ENCODE measurements at regions of chr3 and their contacts with region 1.

Region 1: GRCh38 chr3:133927540-133928066 is 31.9 kb upstream of the RAB6B start:
- DNase-seq: peak; percentile 37
- H3K4me3 ChIP-seq: peak overlapping the region; percentile 32 to 53 (median 39)
- H3K27ac ChIP-seq: no peak overlapping the region
- H3K4me1 ChIP-seq: peaks cover 7% of the 10 kb centered on the region
- H3K27me3 ChIP-seq: no peaks in the 10 kb centered on the region
- CTCF ChIP-seq: peak; percentile 70 to 87
- POLR2A ChIP-seq: no peak

Region 2: GRCh38 chr3:132730891-132731580 is 1196.6 kb before region 1 on chr3:
- CTCF ChIA-PET with region 1: interaction called, 18 read pairs
- POLR2A ChIA-PET with region 1: no interaction called
- dilution Hi-C with region 1: no loop called
- intact Hi-C with region 1: loop called (anchors 2 kb)
- DNase-seq: peak; percentile 61
- H3K4me3 ChIP-seq: no peak overlapping the region
- H3K27ac ChIP-seq: no peak overlapping the region
- H3K4me1 ChIP-seq: peaks cover 2% of the 10 kb centered on the region
- H3K27me3 ChIP-seq: peaks cover 7 to 18% of the 10 kb centered on the region in 2 experiments
- CTCF ChIP-seq: peak; percentile 27 to 40
- POLR2A ChIP-seq: no peak

Region 3: DNA sequence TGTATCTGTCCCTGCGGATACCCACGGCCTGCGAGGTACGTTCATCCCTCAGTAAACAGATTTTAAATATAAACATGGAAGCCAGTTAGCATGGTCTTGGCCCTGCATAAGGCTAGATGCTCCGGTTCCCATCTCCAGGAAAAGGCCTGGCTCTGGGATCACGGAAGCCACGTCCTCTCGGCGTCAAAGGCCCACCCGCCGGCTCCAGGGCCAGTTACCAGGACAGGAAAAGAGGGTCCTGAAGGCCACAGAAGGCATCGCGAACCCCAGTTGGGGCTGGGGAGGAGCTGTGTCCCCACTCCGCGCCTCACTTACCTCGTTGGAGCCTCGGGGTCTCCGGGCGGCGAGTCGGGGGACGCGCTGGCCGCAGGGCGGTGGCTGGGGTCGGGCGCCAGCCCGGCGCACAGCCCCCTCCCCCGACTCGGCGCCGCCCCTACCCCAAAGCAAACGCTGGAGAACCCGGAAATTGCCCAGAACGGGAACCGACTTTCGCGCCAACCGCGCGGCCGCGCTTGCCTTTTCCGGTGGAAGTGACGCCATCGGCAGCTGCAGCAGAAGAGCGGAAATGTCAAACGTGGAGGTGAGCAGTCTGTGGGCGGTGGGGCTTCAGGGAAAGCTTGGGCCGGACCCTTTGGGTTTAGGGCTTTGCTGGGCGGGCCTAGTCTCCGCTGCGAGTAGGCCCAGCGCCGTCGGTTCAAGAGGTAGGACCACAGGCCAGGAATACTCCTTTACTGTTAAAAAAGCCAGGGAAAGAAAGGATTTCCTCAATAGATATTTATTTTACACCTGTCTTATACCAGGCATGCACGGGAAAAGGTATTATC is 265.9 kb before region 1 on chr3 and contains the start of gene TOPBP1:
- CTCF ChIA-PET with region 1: interaction called, 3 read pairs
- POLR2A ChIA-PET with region 1: no interaction called
- dilution Hi-C with region 1: no loop called
- intact Hi-C with region 1: loop called (anchors 1 kb)
- DNase-seq: peak; percentile 69
- H3K4me3 ChIP-seq: peak within 1 kb of the TSS; percentile 60 to 86 (median 62)
- H3K27ac ChIP-seq: peak within 1 kb of the TSS; percentile 90
- H3K4me1 ChIP-seq: peaks cover 22% of the 10 kb centered on the region
- H3K27me3 ChIP-seq: no peaks in the 10 kb centered on the region
- CTCF ChIP-seq: no peak
- POLR2A ChIP-seq: peak; percentile 73
- total RNA-seq, gene TOPBP1: 42.2 and 42.4 TPM in 2 replicates

Region 4: DNA sequence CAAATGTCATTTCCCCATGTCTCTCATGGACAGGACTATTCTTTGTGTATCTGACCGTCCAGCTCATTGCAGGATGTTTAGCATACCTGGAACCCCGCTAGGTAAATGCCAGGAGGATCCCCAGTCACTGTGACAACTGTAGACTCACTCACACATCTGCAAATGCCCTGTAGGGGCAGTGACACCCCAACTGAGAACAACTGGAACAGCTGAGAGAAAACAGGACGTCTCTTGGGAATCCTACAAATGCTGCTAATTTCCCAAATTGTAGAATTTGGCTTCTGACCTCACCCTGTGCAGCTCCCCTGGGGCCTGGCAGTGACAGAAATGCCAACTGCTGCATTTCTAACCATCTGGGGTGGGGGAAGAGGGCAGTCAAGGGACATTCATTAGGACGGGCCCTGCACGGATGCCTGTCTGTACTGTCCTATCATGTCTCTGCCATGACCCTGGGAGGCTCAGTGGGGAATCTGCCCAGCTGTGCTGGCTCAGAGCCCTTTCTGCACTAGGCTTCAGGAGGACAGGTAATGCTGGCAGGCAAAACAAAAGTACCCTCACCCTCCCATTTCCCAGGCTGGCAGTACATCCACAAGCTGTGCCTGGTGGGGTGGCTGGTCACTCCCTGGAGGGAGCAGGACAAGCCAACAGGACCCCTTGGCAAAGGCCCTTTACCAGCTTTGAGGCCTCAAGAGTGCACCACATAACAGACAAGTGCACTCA is 62.3 kb before region 1 on chr3:
- CTCF ChIA-PET with region 1: no interaction called
- POLR2A ChIA-PET with region 1: no interaction called
- dilution Hi-C with region 1: no loop called
- intact Hi-C with region 1: no loop called
- DNase-seq: no peak
- H3K4me3 ChIP-seq: no peak overlapping the region
- H3K27ac ChIP-seq: no peak overlapping the region
- H3K4me1 ChIP-seq: no peaks in the 10 kb centered on the region
- H3K27me3 ChIP-seq: no peaks in the 10 kb centered on the region
- CTCF ChIP-seq: no peak
- POLR2A ChIP-seq: no peak

Region 5: GRCh38 chr3:134039161-134039862 is 111.7 kb after region 1 on chr3:
- CTCF ChIA-PET with region 1: no interaction called
- POLR2A ChIA-PET with region 1: no interaction called
- dilution Hi-C with region 1: no loop called
- intact Hi-C with region 1: loop called (anchors 1 kb)
- DNase-seq: no peak
- H3K4me3 ChIP-seq: no peak overlapping the region
- H3K27ac ChIP-seq: no peak overlapping the region
- H3K4me1 ChIP-seq: no peaks in the 10 kb centered on the region
- H3K27me3 ChIP-seq: no peaks in the 10 kb centered on the region
- CTCF ChIP-seq: peak; percentile 15 to 40
- POLR2A ChIP-seq: no peak

Region 6: DNA sequence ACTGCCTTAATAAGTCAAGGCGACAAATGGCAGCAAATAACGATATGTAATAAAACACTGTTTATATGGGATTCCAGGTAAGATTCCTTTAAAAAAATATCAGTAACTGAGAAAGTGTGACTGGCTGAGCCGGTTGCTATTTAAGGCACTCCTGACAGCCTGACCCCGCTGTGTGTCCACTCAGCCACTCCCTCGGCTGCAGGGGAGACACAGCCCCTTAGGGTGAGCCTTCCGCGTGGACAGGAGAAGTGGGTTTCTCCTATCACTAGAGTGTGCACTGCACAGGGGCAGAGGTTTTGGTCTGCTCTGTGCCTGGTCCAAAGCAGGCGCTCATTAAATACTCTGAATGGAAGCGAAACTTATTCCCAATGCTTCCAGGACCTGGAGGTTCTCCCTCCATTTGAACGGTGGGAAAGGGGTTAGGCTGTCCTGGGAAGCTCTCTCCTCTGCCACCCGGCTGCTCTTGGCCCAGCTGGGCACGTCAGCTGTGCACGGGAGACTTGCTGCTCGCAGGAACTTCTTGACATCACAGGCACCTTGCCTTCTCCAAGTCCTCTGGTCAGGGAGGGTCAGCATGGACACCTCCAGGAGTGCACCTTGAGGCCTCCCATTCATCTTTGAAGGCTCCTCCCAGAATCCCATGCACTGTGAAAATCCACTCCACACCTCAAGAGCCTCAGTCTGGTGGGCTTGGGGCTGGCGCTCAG is 145.4 kb after region 1 on chr3:
- CTCF ChIA-PET with region 1: no interaction called
- POLR2A ChIA-PET with region 1: no interaction called
- dilution Hi-C with region 1: no loop called
- intact Hi-C with region 1: no loop called
- DNase-seq: no peak
- H3K4me3 ChIP-seq: no peak overlapping the region
- H3K27ac ChIP-seq: no peak overlapping the region
- H3K4me1 ChIP-seq: no peaks in the 10 kb centered on the region
- H3K27me3 ChIP-seq: no peaks in the 10 kb centered on the region
- CTCF ChIP-seq: no peak
- POLR2A ChIP-seq: no peak

Region 7: GRCh38 chr3:134222835-134223234 is 295.2 kb after region 1 on chr3:
- CTCF ChIA-PET with region 1: interaction called, 38 read pairs
- POLR2A ChIA-PET with region 1: no interaction called
- dilution Hi-C with region 1: loop called (anchors 25 kb)
- intact Hi-C with region 1: no loop called
- DNase-seq: no peak
- H3K4me3 ChIP-seq: no peak overlapping the region
- H3K27ac ChIP-seq: no peak overlapping the region
- H3K4me1 ChIP-seq: no peaks in the 10 kb centered on the region
- H3K27me3 ChIP-seq: no peaks in the 10 kb centered on the region
- CTCF ChIP-seq: no peak
- POLR2A ChIP-seq: no peak